HEK293T (cell line): ENCODE measurements at regions of chr1 and their contacts with region 1.

Region 1: GRCh38 chr1:39720094-39720999 is 18.3 kb upstream of the PPIE start:
- DNase-seq: peak; percentile 45

Region 2: GRCh38 chr1:39779821-39780220 is 59.5 kb after region 1 on chr1:
- CTCF ChIA-PET with region 1: interaction called, 10 read pairs
- POLR2A ChIA-PET with region 1: no interaction called
- DNase-seq: no peak